Naive thymus-derived CD8-positive, alpha-beta T cell (primary cell): ENCODE measurements at regions of chr15 and their contacts with region 1.

Region 1: GRCh38 chr15:64614519-64614918 is 154.1 kb downstream of the ZNF609 start:
- DNase-seq: no peak
- ATAC-seq: no peak
- H3K4me3 Mint-ChIP-seq: no peak overlapping the region
- H3K27ac Mint-ChIP-seq: peak overlapping the region in 1 of 10 donors; percentile 92
- H3K4me1 Mint-ChIP-seq: peaks cover 35 to 68% (median 54%) of the 10 kb centered on the region in 4 donors
- H3K27me3 Mint-ChIP-seq: no peaks in the 10 kb centered on the region

Region 2: GRCh38 chr15:63610200-63610841 is 1004.2 kb before region 1 on chr15:
- POLR2A ChIA-PET with region 1: interaction called, 10 read pairs
- DNase-seq: peak; percentile 32 to 79 (median 64)
- ATAC-seq: peak; percentile 86 to 88
- H3K4me3 Mint-ChIP-seq: peak overlapping the region in 6 of 10 donors; percentile 5 to 27 (median 15)
- H3K27ac Mint-ChIP-seq: peak overlapping the region; percentile 65 to 95 (median 89)
- H3K4me1 Mint-ChIP-seq: peaks cover 27 to 42% (median 33%) of the 10 kb centered on the region in 4 donors
- H3K27me3 Mint-ChIP-seq: no peaks in the 10 kb centered on the region